Activated B cell treated with CpG ODN at 0.5 μM for 24 hours (primary cell): ENCODE measurements at regions of chr15 and their contacts with region 1.

Region 1: DNA sequence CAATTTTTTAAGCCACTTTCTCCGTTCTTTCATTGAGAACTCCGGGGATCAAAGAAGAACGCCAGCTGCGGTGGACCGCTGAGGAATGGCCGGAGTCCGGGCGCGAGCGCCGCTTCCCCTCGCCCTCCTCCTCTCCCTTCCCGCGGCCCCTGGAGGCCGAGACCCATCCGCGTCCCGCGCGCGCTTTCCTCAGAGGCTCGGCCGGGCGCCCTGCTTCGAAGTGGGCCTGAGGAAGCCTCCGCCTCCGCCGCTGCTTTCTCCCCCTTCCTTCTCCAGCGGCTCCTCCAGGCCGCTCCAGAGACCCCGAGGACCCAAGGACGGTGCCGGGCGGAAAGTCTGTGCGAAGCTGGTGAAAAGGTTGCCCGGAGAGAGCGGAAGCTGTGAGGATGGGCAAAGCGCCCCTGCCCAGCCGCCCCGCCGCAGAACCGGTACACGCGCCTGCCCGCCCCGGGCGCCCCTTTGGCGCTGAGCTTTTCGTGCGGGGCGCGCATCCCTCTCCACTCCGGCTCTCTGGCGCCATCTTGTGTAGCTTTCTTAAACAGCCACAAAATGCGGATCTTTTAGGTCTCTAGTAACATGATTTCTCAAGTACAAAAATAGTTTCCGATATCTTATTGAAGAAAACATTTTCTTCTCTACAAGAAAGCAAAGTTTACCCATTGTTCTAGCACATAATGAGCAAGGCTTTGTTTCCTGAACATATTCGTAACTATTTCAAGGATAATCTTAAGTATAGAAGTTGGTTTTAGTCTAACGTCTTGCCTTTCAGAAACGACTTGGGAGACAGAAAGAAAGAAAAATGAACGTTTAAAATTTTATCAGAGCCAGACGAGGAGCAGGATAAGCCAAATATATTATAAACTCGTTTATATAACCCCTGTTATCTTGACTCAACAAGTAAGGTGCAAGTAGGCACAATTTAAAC is 59.2 kb upstream of the FAM174B start:
- DNase-seq: peak; percentile 51
- ATAC-seq: peak; percentile 82
- H3K4me3 Mint-ChIP-seq: peak overlapping the region; percentile 68
- H3K27ac Mint-ChIP-seq: no peak overlapping the region
- H3K4me1 Mint-ChIP-seq: peaks cover 7% of the 10 kb centered on the region
- H3K27me3 Mint-ChIP-seq: peaks cover 39% of the 10 kb centered on the region
- CTCF ChIP-seq: no peak

Region 2: GRCh38 chr15:92097474-92098178 is 617.1 kb before region 1 on chr15:
- CTCF ChIA-PET with region 1: interaction called, 26 read pairs
- POLR2A ChIA-PET with region 1: no interaction called
- intact Hi-C with region 1: no loop called
- DNase-seq: no peak
- ATAC-seq: peak; percentile 52
- H3K4me3 Mint-ChIP-seq: no peak overlapping the region
- H3K27ac Mint-ChIP-seq: no peak overlapping the region
- H3K4me1 Mint-ChIP-seq: peaks cover 22% of the 10 kb centered on the region
- H3K27me3 Mint-ChIP-seq: no peaks in the 10 kb centered on the region
- CTCF ChIP-seq: no peak

Region 3: GRCh38 chr15:92277776-92278175 is 437.0 kb before region 1 on chr15:
- CTCF ChIA-PET with region 1: no interaction called
- POLR2A ChIA-PET with region 1: no interaction called
- intact Hi-C with region 1: loop called (anchors 5 kb)
- DNase-seq: no peak
- ATAC-seq: no peak
- H3K4me3 Mint-ChIP-seq: no peak overlapping the region
- H3K27ac Mint-ChIP-seq: no peak overlapping the region
- H3K4me1 Mint-ChIP-seq: no peaks in the 10 kb centered on the region
- H3K27me3 Mint-ChIP-seq: no peaks in the 10 kb centered on the region
- CTCF ChIP-seq: no peak

Region 4: GRCh38 chr15:92645030-92645756 is 69.5 kb before region 1 on chr15:
- CTCF ChIA-PET with region 1: no interaction called
- POLR2A ChIA-PET with region 1: no interaction called
- intact Hi-C with region 1: no loop called
- DNase-seq: no peak
- ATAC-seq: no peak
- H3K4me3 Mint-ChIP-seq: no peak overlapping the region
- H3K27ac Mint-ChIP-seq: no peak overlapping the region
- H3K4me1 Mint-ChIP-seq: no peaks in the 10 kb centered on the region
- H3K27me3 Mint-ChIP-seq: peaks cover 11% of the 10 kb centered on the region
- CTCF ChIP-seq: no peak